ENCODE measurements at regions of chr22 and their contacts with region 1.

Region 1: DNA sequence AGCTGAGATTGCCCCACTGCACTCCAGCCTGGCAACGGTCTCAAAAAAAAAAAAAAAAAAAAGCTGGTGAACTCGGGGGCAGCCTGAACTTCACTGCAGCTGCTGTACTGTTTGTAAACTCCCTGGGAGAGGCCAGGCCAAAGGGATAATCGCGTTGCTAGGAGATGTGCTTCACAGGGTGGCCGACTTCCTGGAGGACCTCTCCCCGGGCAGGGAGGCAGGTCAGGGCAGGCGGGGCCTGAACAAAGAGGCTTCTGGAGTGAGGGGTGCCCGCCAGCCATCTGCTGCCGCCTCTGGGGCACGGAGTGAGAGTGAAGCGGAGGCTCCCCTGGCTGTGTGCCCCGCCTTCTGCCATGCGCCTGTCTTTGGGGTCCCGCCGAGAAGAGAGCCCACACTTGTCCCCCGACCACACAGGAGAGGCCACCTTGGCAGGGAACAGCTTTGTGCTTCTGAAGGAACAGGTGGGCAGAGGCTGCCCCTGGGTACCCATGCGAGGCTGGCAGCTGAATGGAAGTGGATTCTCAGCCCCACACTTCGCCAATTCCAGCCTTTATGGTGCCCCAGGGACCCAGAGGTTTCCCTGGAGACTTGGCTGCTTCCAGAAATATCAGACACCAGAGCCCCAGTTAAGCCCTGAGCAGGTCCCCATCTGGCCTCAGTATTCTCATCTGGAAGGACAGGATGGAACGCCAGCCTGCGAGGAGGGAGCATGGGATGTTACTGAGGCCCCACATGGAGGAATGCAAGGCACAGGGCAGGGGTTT is 29.6 kb downstream of the TMEM184B start:
- H3K4me3 ChIP-seq: no peak overlapping the region
- H3K27ac ChIP-seq: no peak overlapping the region
- H3K4me1 ChIP-seq: no peaks in the 10 kb centered on the region
- CTCF ChIP-seq: no peak

Region 2: DNA sequence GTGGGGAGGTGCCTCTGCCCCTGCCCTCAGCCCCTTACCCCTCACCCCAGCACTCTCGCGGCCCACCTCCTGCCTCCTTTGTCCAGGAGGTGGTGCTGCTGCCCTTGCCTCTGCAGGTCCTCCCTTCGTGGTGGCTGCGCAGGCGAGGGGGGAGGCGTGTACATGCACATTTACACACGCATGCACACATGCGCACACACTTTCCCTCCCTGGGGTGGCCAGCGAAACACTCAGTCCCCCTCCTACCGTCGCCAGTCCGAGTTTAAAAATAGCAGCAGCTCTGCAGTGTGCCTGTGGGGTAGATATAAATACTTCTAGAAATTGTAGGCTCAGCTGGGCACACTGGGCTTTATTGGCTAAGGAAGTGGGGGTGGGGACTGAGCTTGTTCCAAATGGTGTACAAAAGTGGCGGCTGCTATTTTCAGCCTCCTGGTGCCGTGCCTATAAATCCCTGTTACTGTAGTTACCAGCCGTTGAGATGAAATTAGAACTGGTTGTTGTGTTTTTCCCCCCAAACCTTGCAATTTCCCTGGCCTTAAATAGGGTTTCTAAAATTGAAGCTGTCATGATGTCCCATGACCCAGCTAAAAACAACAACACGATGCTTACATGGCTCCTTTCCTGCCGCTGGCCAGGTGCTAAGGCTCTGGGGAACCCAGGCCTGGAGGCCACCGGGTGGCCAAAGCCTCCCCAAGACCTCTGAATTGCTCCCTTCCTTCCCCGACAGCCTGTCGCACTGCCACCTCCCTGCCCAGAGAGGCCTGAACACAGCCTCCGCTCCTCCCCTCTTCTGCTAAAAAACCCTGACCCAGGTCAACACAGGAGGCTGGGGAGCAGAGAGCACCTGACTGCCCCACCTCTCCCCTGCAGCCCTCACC is 173.6 kb before region 1 on chr22:
- CTCF ChIA-PET with region 1: no interaction called
- POLR2A ChIA-PET with region 1: no interaction called
- H3K4me3 ChIP-seq: no peak overlapping the region
- H3K27ac ChIP-seq: no peak overlapping the region
- H3K4me1 ChIP-seq: no peaks in the 10 kb centered on the region
- CTCF ChIP-seq: peak; percentile 46; the same call in 1 of the 2 replicates

Region 3: GRCh38 chr22:38230108-38230825 is 12.9 kb before region 1 on chr22:
- CTCF ChIA-PET with region 1: interaction called, 12 read pairs
- POLR2A ChIA-PET with region 1: no interaction called
- H3K4me3 ChIP-seq: no peak overlapping the region
- H3K27ac ChIP-seq: no peak overlapping the region
- H3K4me1 ChIP-seq: no peaks in the 10 kb centered on the region
- CTCF ChIP-seq: no peak

Measured in HEK293 (cell line).